Caco-2 (cell line): ENCODE measurements at regions of chr10 and their contacts with region 1.

Region 1: GRCh38 chr10:11036407-11037011 is 18.8 kb downstream of the CELF2 start:
- DNase-seq: peak; percentile 67 to 70
- H3K4me3 ChIP-seq: no peak overlapping the region
- H3K4me3 Mint-ChIP-seq: no peak overlapping the region
- H3K27ac Mint-ChIP-seq: no peak overlapping the region
- H3K4me1 ChIP-seq: no peaks in the 10 kb centered on the region
- H3K4me1 Mint-ChIP-seq: no peaks in the 10 kb centered on the region
- H3K27me3 ChIP-seq: no peaks in the 10 kb centered on the region; the same call in 1 of the 2 replicates
- H3K27me3 Mint-ChIP-seq: peaks cover 5% of the 10 kb centered on the region
- CTCF ChIP-seq: peak; percentile 71 to 81

Region 2: GRCh38 chr10:9331583-9332008 is 1704.9 kb before region 1 on chr10:
- CTCF ChIA-PET with region 1: no interaction called
- POLR2A ChIA-PET with region 1: no interaction called
- intact Hi-C with region 1: loop called (anchors 1 kb)
- DNase-seq: peak in 1 of 2 experiments; percentile 42
- H3K4me3 ChIP-seq: no peak overlapping the region
- H3K4me3 Mint-ChIP-seq: no peak overlapping the region
- H3K27ac Mint-ChIP-seq: no peak overlapping the region
- H3K4me1 ChIP-seq: no peaks in the 10 kb centered on the region
- H3K4me1 Mint-ChIP-seq: no peaks in the 10 kb centered on the region
- H3K27me3 ChIP-seq: no peaks in the 10 kb centered on the region
- H3K27me3 Mint-ChIP-seq: peaks cover 12% of the 10 kb centered on the region
- CTCF ChIP-seq: peak; percentile 81 to 88

Region 3: GRCh38 chr10:9757186-9757585 is 1279.3 kb before region 1 on chr10:
- CTCF ChIA-PET with region 1: no interaction called
- POLR2A ChIA-PET with region 1: no interaction called
- intact Hi-C with region 1: no loop called
- DNase-seq: no peak
- H3K4me3 ChIP-seq: no peak overlapping the region
- H3K4me3 Mint-ChIP-seq: no peak overlapping the region
- H3K27ac Mint-ChIP-seq: no peak overlapping the region
- H3K4me1 ChIP-seq: no peaks in the 10 kb centered on the region
- H3K4me1 Mint-ChIP-seq: no peaks in the 10 kb centered on the region
- H3K27me3 ChIP-seq: no peaks in the 10 kb centered on the region
- H3K27me3 Mint-ChIP-seq: peaks cover 2% of the 10 kb centered on the region
- CTCF ChIP-seq: no peak

Region 4: DNA sequence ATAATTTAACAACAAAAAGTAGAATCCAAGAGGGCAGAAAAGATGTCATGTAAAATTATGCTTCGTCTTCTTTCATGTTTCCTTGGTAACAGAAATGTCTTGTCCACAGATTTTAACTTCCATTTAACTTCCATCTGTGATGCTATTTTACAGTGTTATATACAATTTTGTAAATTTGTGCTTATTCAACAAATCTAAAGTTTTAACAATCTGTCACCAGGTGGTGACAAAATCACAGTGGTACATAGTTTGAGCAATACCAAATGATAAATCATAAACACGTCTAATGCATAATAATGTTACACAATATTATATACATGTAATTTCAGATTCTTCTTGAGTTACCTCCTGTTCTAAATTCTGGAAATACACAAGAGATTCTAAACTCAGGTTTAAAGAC is 803.3 kb before region 1 on chr10:
- CTCF ChIA-PET with region 1: no interaction called
- POLR2A ChIA-PET with region 1: no interaction called
- intact Hi-C with region 1: loop called (anchors 1 kb)
- DNase-seq: no peak
- H3K4me3 ChIP-seq: no peak overlapping the region
- H3K4me3 Mint-ChIP-seq: no peak overlapping the region
- H3K27ac Mint-ChIP-seq: no peak overlapping the region
- H3K4me1 ChIP-seq: no peaks in the 10 kb centered on the region
- H3K4me1 Mint-ChIP-seq: no peaks in the 10 kb centered on the region
- H3K27me3 ChIP-seq: no peaks in the 10 kb centered on the region
- H3K27me3 Mint-ChIP-seq: peaks cover 3% of the 10 kb centered on the region
- CTCF ChIP-seq: no peak

Region 5: GRCh38 chr10:10869592-10869991 is 166.9 kb before region 1 on chr10:
- CTCF ChIA-PET with region 1: no interaction called
- POLR2A ChIA-PET with region 1: no interaction called
- intact Hi-C with region 1: loop called (anchors 10 kb)
- DNase-seq: no peak
- H3K4me3 ChIP-seq: no peak overlapping the region
- H3K4me3 Mint-ChIP-seq: no peak overlapping the region
- H3K27ac Mint-ChIP-seq: no peak overlapping the region
- H3K4me1 ChIP-seq: no peaks in the 10 kb centered on the region
- H3K4me1 Mint-ChIP-seq: no peaks in the 10 kb centered on the region
- H3K27me3 ChIP-seq: no peaks in the 10 kb centered on the region
- H3K27me3 Mint-ChIP-seq: peaks cover 16% of the 10 kb centered on the region
- CTCF ChIP-seq: no peak

Region 6: GRCh38 chr10:10967581-10968256 is 68.8 kb before region 1 on chr10:
- CTCF ChIA-PET with region 1: no interaction called
- POLR2A ChIA-PET with region 1: no interaction called
- intact Hi-C with region 1: no loop called
- DNase-seq: no peak
- H3K4me3 ChIP-seq: no peak overlapping the region
- H3K4me3 Mint-ChIP-seq: no peak overlapping the region
- H3K27ac Mint-ChIP-seq: no peak overlapping the region
- H3K4me1 ChIP-seq: no peaks in the 10 kb centered on the region
- H3K4me1 Mint-ChIP-seq: no peaks in the 10 kb centered on the region
- H3K27me3 ChIP-seq: no peaks in the 10 kb centered on the region
- H3K27me3 Mint-ChIP-seq: peaks cover 13% of the 10 kb centered on the region
- CTCF ChIP-seq: no peak